Caco-2 (cell line): ENCODE measurements at regions of chr18 and their contacts with region 1.

Region 1: GRCh38 chr18:12391618-12392165 is 14.7 kb upstream of the AFG3L2 start:
- DNase-seq: peak; percentile 54 to 66
- H3K4me3 ChIP-seq: no peak overlapping the region
- H3K4me3 Mint-ChIP-seq: no peak overlapping the region
- H3K27ac Mint-ChIP-seq: no peak overlapping the region
- H3K4me1 ChIP-seq: peaks cover 10% of the 10 kb centered on the region; the same call in 1 of the 2 replicates
- H3K4me1 Mint-ChIP-seq: peaks cover 12% of the 10 kb centered on the region
- H3K27me3 ChIP-seq: no peaks in the 10 kb centered on the region
- H3K27me3 Mint-ChIP-seq: no peaks in the 10 kb centered on the region
- CTCF ChIP-seq: peak; percentile 88 to 96

Region 2: GRCh38 chr18:12516049-12516630 is 124.4 kb after region 1 on chr18:
- CTCF ChIA-PET with region 1: no interaction called
- POLR2A ChIA-PET with region 1: no interaction called
- intact Hi-C with region 1: loop called (anchors 10 kb)
- DNase-seq: no peak
- H3K4me3 ChIP-seq: no peak overlapping the region
- H3K4me3 Mint-ChIP-seq: no peak overlapping the region
- H3K27ac Mint-ChIP-seq: no peak overlapping the region
- H3K4me1 ChIP-seq: no peaks in the 10 kb centered on the region
- H3K4me1 Mint-ChIP-seq: no peaks in the 10 kb centered on the region
- H3K27me3 ChIP-seq: no peaks in the 10 kb centered on the region
- H3K27me3 Mint-ChIP-seq: no peaks in the 10 kb centered on the region
- CTCF ChIP-seq: no peak